PC-3 (cell line): ENCODE measurements at regions of chr1 and their contacts with region 1.

Region 1: GRCh38 chr1:225754940-225755641 is 22.5 kb upstream of the SRP9 start:
- DNase-seq: peak; percentile 81
- ATAC-seq: peak; percentile 86
- H3K4me3 ChIP-seq: no peak overlapping the region
- H3K27ac ChIP-seq: peak overlapping the region; percentile 37
- H3K4me1 ChIP-seq: peaks cover 16% of the 10 kb centered on the region
- H3K27me3 ChIP-seq: no peaks in the 10 kb centered on the region
- CTCF ChIP-seq: no peak

Region 2: GRCh38 chr1:225694151-225694603 is 60.9 kb before region 1 on chr1:
- CTCF ChIA-PET with region 1: no interaction called
- POLR2A ChIA-PET with region 1: no interaction called
- intact Hi-C with region 1: no loop called
- DNase-seq: no peak
- ATAC-seq: no peak
- H3K4me3 ChIP-seq: no peak overlapping the region
- H3K27ac ChIP-seq: no peak overlapping the region
- H3K4me1 ChIP-seq: peaks cover 27% of the 10 kb centered on the region
- H3K27me3 ChIP-seq: no peaks in the 10 kb centered on the region
- CTCF ChIP-seq: no peak

Region 3: GRCh38 chr1:225720937-225721336 is 34.2 kb before region 1 on chr1:
- CTCF ChIA-PET with region 1: no interaction called
- POLR2A ChIA-PET with region 1: no interaction called
- intact Hi-C with region 1: no loop called
- DNase-seq: no peak
- ATAC-seq: no peak
- H3K4me3 ChIP-seq: no peak overlapping the region
- H3K27ac ChIP-seq: no peak overlapping the region
- H3K4me1 ChIP-seq: no peaks in the 10 kb centered on the region
- H3K27me3 ChIP-seq: no peaks in the 10 kb centered on the region
- CTCF ChIP-seq: no peak

Region 4: DNA sequence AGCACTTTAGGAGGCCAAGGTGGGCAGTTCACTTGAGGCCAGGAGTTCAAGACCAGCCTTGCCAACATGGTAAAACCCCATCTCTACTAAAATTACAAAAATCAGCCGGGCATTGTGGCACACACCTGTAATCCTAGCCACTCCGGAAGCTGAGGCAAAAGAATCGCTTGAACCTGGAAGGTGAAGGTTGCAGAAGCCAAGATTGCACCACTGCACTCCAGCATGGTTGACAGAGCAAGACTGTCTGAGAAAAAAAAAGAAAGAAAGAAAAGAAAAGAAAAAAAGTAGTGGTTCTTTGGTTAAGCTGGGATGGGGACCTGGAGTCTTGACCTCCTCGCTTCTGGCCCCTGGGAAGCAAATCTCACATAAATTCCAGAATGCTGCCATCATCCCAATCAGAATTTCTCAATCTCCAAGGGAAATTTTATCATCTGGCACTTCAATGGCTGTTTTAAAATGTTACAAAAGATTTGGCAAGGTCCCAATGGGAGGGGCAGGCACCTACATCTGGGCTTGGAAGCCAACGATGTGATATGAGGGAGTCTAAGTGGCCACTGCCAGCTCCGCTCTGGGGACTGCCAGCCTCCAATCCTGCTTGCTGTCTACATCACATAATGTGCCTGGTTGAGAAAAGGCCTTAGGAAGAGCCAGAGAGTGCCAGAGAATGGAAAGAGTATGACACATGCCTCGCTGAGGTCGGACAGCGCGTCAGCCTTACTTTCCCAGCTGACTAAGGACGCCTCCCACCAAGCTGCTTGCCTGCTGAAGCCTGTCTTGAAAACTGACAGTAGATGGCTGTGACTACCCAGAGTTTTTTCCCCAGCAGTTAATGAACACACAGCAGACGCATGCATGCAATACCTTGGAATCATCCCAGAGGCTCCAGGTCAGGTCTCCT is 19.6 kb before region 1 on chr1:
- CTCF ChIA-PET with region 1: interaction called, 3 read pairs
- POLR2A ChIA-PET with region 1: no interaction called
- intact Hi-C with region 1: loop called (anchors 2 kb)
- DNase-seq: peak; percentile 95
- ATAC-seq: peak; percentile 83
- H3K4me3 ChIP-seq: 0 out of 2 replicates have a peak overlapping the region, but pooled peaks have one; percentile 4
- H3K27ac ChIP-seq: peak overlapping the region; percentile 68
- H3K4me1 ChIP-seq: peaks cover 30% of the 10 kb centered on the region
- H3K27me3 ChIP-seq: no peaks in the 10 kb centered on the region
- CTCF ChIP-seq: peak; percentile 25; the same call in 1 of the 2 replicates